ENCODE measurements at regions of chr2 and their contacts with region 1.

Region 1: DNA sequence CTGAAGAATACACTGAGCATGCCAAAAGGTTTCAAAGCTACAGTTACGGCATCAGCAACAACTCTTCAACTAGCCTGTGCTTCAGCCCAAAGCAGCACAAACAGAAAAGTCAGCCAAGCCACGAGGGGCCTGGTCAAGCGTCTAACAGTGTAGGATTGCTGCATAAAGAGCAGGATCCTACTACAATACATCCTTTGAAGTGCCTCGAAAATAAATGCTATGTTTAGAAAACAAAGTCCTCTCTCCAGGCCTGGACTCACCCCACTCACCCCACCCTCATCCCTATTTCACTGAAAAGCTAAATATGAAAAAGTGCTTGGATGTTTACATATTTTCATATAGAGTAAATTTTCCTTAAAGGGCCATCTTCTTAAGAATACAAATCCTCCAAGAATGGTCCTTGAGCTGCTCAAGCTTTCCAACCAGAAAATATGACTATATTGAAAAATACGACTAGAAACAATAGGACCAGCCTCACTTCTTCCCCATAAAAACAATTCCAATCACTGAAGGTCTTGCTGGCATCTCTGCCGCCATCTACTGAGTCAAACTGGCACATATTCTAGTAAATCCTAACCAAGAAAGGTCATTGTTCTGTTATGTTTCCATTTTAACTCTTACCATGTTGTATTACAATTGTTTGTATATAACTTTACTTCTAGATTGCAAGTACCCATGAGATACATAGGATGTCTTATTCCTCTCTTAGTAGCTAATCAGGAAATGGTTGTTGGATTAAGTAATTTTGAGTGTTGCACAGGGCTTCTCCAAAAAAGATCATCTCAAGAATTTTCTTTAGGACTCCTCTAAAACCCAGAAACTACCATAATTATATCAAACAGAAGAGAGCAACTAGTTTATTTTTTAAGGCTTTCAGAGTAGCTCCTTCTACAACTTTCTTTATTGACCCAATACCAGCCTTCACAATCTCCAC is 63.6 kb downstream of the CLHC1 start:
- DNase-seq: peak in 3 of 5 donors; percentile 35 to 79 (median 76)
- H3K4me3 ChIP-seq: no peak overlapping the region
- H3K27ac ChIP-seq: peak overlapping the region in 1 of 2 donors; percentile 14
- H3K4me1 ChIP-seq: peaks cover 3 to 16% (median 13%) of the 10 kb centered on the region in 3 donors
- H3K27me3 ChIP-seq: no peaks in the 10 kb centered on the region
- CTCF ChIP-seq: peak; percentile 85

Region 2: GRCh38 chr2:55010149-55010591 is 158.3 kb before region 1 on chr2:
- intact Hi-C with region 1: loop called (anchors 10 kb)
- DNase-seq: peak; percentile 27 to 70 (median 59)
- H3K4me3 ChIP-seq: peak overlapping the region; percentile 45 to 88 (median 82)
- H3K27ac ChIP-seq: peak overlapping the region; percentile 53 to 80
- H3K4me1 ChIP-seq: peaks cover 0 to 41% (median 6%) of the 10 kb centered on the region in 3 donors
- H3K27me3 ChIP-seq: no peaks in the 10 kb centered on the region
- CTCF ChIP-seq: no peak

Region 3: GRCh38 chr2:55049043-55049793 is 119.3 kb before region 1 on chr2:
- intact Hi-C with region 1: loop called (anchors 10 kb)
- DNase-seq: peak; percentile 90 to 96 (median 93)
- H3K4me3 ChIP-seq: peak overlapping the region; percentile 84 to 97 (median 94)
- H3K27ac ChIP-seq: peak overlapping the region; percentile 96 to 99
- H3K4me1 ChIP-seq: peaks cover 7 to 18% (median 12%) of the 10 kb centered on the region in 3 donors
- H3K27me3 ChIP-seq: no peaks in the 10 kb centered on the region
- CTCF ChIP-seq: peak; percentile 54

Measured in kidney (tissue), 22 donors.